Activated CD4-positive, alpha-beta T cell treated with anti-CD3 and anti-CD28 coated beads for 36 hours (primary cell): ENCODE measurements at regions of chr15 and their contacts with region 1.

Region 1: DNA sequence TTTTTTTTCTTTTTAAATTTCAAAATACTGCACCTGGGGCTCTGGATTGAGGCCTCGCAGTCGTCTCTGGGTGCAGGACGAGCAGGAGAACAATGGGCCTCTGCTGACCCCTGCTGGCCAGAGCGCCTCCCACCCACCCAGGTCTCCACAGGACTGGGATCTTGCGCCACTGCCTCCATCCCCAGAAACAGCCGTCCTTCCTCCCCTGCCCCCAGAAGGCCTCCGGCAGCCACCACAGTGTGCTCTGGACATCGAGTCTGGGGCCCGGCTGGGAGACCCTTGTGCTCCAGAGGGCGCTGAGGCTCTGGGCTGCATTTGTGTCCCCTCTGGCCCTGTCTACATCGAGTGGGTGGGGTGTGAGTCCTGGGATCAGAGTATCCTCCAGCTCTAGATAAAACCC is 6.6 kb upstream of the ACSBG1 start:
- DNase-seq: peak; percentile 93
- ATAC-seq: peak; percentile 96
- H3K4me3 Mint-ChIP-seq: no peak overlapping the region
- H3K27ac Mint-ChIP-seq: no peak overlapping the region
- H3K4me1 Mint-ChIP-seq: no peaks in the 10 kb centered on the region
- H3K27me3 Mint-ChIP-seq: no peaks in the 10 kb centered on the region

Region 2: DNA sequence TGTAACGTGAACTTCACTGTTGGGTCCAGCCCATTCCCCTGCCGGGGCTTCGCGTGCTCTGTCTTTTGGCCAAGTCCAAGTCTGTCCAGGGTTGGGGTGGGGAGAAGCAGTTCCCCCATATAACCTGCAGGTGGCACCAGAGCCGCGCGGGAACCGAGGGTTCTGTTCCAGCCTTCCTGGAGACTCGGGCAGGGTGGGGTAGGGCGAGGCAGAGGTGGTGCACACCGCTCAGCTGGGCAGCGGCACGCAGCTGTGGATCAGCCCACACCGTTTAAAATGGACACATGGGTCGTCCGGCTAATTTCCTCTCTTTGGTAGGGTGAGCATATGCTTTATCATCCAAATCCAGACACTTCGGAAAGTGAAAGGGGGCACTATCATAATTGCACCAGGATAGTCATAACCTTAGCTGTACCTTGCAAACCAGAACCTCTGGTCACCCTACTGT is 281.6 kb before region 1 on chr15:
- CTCF ChIA-PET with region 1: interaction called, 10 read pairs
- POLR2A ChIA-PET with region 1: no interaction called
- intact Hi-C with region 1: loop called (anchors 1 kb)
- DNase-seq: peak; percentile 87
- ATAC-seq: peak; percentile 98
- H3K4me3 Mint-ChIP-seq: no peak overlapping the region
- H3K27ac Mint-ChIP-seq: no peak overlapping the region
- H3K4me1 Mint-ChIP-seq: peaks cover 5% of the 10 kb centered on the region
- H3K27me3 Mint-ChIP-seq: peaks cover 6% of the 10 kb centered on the region

Region 3: DNA sequence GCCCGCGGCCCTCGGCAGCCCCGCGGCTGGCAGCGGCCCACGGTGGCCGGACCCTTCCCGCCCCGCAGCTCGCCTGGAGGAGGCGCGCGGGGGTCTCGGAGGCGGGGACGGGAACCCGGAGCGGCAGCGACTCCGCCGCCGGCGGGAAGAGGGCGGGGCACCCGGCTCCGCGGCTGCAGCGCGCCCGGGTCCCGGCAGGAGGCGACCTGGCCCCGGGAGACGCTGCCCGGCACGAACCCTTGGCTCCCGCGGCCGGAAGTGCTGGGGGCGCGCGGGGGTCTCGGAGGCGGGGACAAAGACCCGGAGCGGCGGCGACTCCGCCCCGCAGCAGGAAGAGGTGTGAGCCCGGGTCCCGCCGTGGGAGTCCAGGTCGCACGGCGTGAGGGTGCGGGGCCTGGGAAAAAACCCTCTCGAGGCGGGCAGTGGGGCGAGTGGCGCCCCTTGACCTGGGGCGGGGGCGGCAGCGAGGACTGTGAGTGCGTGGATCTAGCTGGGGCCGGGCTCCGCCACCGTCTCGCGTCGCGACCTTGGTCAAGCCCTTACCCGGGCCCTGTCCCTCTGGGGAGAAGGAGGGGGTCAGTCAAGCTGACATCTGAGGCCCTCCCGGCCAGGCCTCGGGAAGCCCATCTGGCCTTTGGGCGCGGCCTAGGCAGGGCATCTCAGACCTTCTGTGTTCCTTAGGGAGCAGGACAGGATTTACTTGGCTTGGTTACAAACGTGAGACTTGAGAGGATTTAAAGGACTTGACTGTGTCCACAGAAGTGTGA is 109.5 kb before region 1 on chr15 and contains the start of gene CIB2:
- CTCF ChIA-PET with region 1: interaction called, 34 read pairs
- POLR2A ChIA-PET with region 1: no interaction called
- intact Hi-C with region 1: loop called (anchors 1 to 5 kb)
- DNase-seq: peak; percentile 86
- ATAC-seq: peak; percentile 87
- H3K4me3 Mint-ChIP-seq: peak within 1 kb of the TSS; percentile 82
- H3K27ac Mint-ChIP-seq: peak within 1 kb of the TSS; percentile 88
- H3K4me1 Mint-ChIP-seq: peaks cover 20% of the 10 kb centered on the region
- H3K27me3 Mint-ChIP-seq: no peaks in the 10 kb centered on the region
- total RNA-seq, gene CIB2: 0.91 to 1.2 TPM

Region 4: DNA sequence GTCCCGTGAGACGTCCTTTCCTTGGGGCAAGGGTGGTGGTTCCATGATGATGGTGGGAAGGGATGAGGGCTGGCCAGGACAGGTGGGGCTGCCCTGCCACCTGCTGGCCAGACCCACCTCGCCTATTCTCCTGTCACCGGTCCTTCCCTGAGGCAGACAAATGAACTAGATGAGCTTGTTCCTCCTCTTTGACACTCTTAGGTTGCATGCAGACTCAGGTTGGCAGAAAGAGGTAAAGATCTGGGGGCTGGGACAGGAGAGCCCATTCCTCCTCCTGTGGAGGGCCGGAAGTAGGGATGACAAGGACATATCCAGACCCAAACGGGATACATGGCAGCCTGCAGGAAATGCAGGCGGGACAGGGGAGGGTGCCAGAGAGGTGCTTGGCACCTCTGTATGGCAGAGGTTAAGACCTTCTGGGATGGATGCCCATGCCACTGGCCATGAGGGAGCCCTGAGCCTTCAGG is 45.2 kb before region 1 on chr15:
- CTCF ChIA-PET with region 1: interaction called, 16 read pairs
- POLR2A ChIA-PET with region 1: no interaction called
- intact Hi-C with region 1: loop called in 1 of 2 experiments (anchors 1 kb)
- DNase-seq: peak; percentile 66
- ATAC-seq: peak; percentile 87
- H3K4me3 Mint-ChIP-seq: no peak overlapping the region
- H3K27ac Mint-ChIP-seq: no peak overlapping the region
- H3K4me1 Mint-ChIP-seq: no peaks in the 10 kb centered on the region
- H3K27me3 Mint-ChIP-seq: no peaks in the 10 kb centered on the region

Region 5: GRCh38 chr15:78257681-78258080 is 16.7 kb after region 1 on chr15:
- CTCF ChIA-PET with region 1: interaction called, 10 read pairs
- POLR2A ChIA-PET with region 1: no interaction called
- intact Hi-C with region 1: no loop called
- DNase-seq: no peak
- ATAC-seq: no peak
- H3K4me3 Mint-ChIP-seq: no peak overlapping the region
- H3K27ac Mint-ChIP-seq: no peak overlapping the region
- H3K4me1 Mint-ChIP-seq: no peaks in the 10 kb centered on the region
- H3K27me3 Mint-ChIP-seq: no peaks in the 10 kb centered on the region